ENCODE measurements at regions of chr14 and their contacts with region 1.

Region 1: DNA sequence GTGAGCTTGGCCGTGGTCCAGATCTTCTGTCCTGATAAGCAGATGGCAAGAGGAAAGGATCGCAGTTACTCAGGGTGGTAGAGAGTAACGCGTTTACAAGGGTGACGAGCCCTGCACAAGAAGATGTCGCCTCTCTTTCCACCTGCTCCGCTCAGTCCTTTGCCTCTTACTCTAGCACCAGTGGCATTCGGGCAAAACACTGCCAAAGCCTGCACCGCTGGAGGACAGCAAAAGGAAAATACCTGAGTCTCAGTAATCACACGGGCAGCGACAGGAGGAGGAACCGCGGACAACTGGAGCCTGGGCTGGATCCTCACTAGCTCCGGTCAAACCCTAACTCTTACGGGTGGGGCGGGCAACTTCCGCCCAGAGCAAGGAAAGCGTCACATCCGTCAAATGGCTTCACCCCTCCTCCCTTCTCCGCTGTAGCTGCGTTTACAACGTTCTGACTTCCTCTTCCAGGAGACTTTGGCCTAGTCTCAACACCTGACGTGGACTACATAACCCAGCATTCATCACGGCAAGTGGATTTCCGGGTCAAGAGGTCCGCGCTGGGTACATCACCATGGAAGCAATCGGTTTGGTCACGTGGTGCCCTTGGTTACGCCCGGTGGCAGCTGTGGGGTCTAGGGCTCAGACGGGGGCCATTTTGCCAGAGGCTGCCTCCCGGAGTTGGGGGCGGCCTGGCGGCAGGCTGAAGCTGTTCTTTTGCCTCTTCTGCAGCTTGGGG is at the starts of genes KLHL28 and TOGARAM1:
- DNase-seq: peak; percentile 86
- ATAC-seq: peak; percentile 91
- H3K4me3 Mint-ChIP-seq: no peak within 1 kb of the TSS
- H3K27ac Mint-ChIP-seq: no peak within 1 kb of the TSS
- H3K4me1 Mint-ChIP-seq: peaks cover 59% of the 10 kb centered on the region
- H3K27me3 Mint-ChIP-seq: no peaks in the 10 kb centered on the region
- CTCF ChIP-seq: no peak
- total RNA-seq, gene KLHL28: 18.1 and 25.3 TPM in 2 replicates
- total RNA-seq, gene TOGARAM1: 12.7 and 16.9 TPM in 2 replicates

Region 2: GRCh38 chr14:44142006-44142405 is 819.8 kb before region 1 on chr14:
- CTCF ChIA-PET with region 1: no interaction called
- POLR2A ChIA-PET with region 1: no interaction called
- intact Hi-C with region 1: no loop called
- DNase-seq: no peak
- ATAC-seq: no peak
- H3K4me3 Mint-ChIP-seq: no peak overlapping the region
- H3K27ac Mint-ChIP-seq: no peak overlapping the region
- H3K4me1 Mint-ChIP-seq: no peaks in the 10 kb centered on the region
- H3K27me3 Mint-ChIP-seq: no peaks in the 10 kb centered on the region
- CTCF ChIP-seq: no peak

Region 3: DNA sequence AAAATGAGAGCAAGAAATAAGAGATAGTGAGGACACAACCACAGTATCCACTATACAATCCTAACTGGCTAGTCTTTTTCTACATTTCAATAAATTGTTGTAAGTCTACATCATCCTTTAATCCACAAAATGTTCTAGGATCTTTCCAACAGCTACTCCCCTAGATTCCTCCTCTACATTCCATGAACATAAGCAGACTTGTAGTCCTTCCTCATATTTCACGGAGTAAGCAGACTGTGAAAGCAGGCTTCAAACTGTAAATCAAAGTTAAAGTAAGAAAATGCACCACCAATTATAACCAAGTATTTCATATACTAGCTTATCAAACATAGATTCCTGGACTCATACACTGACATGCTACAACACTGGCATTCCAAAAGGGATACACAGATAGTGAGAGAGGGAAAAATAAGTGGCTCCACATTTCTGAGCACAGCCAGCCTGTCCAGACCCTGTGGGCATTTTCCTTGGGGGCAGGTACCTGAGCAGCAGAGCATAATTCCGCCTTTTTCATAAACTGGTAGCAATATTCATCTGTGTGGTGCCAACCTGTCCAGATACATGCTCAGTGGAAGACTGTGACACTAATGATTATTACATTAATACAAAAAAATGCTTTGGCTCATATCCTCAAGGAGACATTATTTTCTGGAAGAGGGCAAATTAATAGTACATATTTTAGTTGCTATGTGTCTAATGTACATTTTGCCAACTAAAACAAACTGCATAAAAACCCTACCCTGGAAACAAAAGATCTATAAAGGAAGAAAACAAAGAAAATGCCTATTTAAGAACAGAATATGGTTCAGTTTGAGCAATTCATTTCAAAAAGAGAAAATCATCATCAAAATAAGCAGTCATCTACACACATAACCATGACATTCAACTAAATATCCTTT is 341.4 kb before region 1 on chr14:
- CTCF ChIA-PET with region 1: no interaction called
- POLR2A ChIA-PET with region 1: no interaction called
- intact Hi-C with region 1: no loop called
- DNase-seq: no peak
- ATAC-seq: no peak
- H3K4me3 Mint-ChIP-seq: no peak overlapping the region
- H3K27ac Mint-ChIP-seq: no peak overlapping the region
- H3K4me1 Mint-ChIP-seq: no peaks in the 10 kb centered on the region
- H3K27me3 Mint-ChIP-seq: no peaks in the 10 kb centered on the region
- CTCF ChIP-seq: no peak

Region 4: DNA sequence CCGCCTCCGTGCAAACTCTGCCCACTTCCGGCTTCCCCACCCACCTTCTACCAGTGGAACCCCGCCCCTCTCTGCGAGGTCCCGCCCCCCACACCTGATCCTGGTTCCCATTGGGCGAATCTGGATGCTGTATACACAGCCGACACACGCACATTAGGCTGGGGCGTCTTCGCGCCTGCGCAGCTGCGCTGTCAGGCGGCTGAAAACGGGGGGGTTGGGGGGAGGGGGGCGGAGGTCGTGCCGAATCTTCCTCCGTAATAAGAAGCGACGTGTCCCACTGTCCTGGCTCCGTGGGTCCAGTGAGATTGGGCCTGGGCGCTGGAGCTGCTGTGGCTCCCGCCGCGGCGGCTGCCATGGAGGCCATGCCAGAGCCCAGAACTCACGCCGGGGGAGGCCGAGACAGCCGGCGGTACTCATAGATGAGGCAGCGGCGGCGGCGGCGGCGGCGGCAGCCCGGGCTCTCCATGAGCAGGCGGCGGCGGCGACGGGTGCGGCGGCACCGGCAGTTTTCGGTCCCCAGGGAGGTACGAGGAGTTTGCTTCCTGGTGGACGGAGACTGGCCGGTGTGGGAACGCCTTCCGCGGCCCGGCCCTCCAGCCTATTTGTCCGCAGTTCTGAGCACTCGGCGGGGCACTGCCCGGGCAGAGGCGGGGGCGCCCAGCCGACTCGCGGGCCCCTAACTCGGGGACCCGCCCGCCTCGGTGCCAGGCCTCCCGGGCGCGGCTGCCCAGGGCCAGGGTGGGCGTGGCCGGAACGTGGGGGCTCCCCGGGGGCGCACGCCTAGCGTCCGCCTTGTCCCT is 64.5 kb before region 1 on chr14:
- CTCF ChIA-PET with region 1: interaction called, 10 read pairs
- POLR2A ChIA-PET with region 1: interaction called, 64 read pairs
- intact Hi-C with region 1: loop called (anchors 1 kb)
- DNase-seq: peak; percentile 75
- ATAC-seq: peak; percentile 97
- H3K4me3 Mint-ChIP-seq: peak overlapping the region; percentile 93
- H3K27ac Mint-ChIP-seq: peak overlapping the region; percentile 94
- H3K4me1 Mint-ChIP-seq: peaks cover 17% of the 10 kb centered on the region
- H3K27me3 Mint-ChIP-seq: no peaks in the 10 kb centered on the region
- CTCF ChIP-seq: no peak

Region 5: GRCh38 chr14:44945264-44945663 is 16.5 kb before region 1 on chr14:
- CTCF ChIA-PET with region 1: no interaction called
- POLR2A ChIA-PET with region 1: interaction called, 4 read pairs
- intact Hi-C with region 1: loop called (anchors 1 kb)
- DNase-seq: no peak
- ATAC-seq: no peak
- H3K4me3 Mint-ChIP-seq: no peak overlapping the region
- H3K27ac Mint-ChIP-seq: no peak overlapping the region
- H3K4me1 Mint-ChIP-seq: no peaks in the 10 kb centered on the region
- H3K27me3 Mint-ChIP-seq: no peaks in the 10 kb centered on the region
- CTCF ChIP-seq: no peak

Region 6: DNA sequence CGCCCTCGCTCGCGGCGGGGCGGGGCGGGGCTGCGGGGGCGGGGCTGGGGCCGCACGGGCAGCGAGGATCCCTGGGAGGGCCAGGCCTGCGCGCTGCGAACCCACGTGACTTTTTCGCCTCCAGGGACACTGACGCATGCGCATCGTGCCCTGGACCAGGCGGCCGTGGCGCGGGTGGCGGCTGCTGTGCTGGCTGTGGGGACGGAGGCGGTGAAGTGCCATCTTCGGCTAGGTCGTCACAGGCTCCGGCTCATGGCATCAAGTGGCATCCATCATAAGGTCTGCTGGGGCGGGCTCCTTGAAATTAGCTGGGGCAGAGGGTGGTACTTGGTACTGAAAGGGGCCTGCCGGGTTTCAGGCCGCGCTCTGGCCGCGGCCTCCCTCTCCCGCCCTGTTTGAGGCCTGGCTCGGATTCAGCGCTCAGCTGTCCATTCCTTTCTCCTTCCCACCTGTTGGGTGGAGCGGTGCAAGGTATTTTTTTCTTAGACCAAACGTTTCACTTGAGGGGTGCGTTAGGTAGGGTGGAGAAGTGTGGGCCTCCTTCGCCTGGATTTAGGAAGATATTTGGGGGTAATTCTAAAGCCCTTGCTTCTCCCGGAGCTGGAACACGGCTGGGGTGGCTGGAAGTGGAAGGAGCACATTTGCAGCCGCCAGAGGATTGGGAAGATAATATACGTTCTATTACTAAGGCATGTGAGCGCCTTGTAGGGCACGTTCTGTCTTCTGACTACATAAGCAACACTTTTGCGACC is 122.4 kb after region 1 on chr14 and contains the start of gene PRPF39:
- CTCF ChIA-PET with region 1: no interaction called
- POLR2A ChIA-PET with region 1: interaction called, 12 read pairs
- intact Hi-C with region 1: loop called (anchors 1 kb)
- DNase-seq: peak; percentile 97
- ATAC-seq: peak; percentile 94
- H3K4me3 Mint-ChIP-seq: peak within 1 kb of the TSS; percentile 96
- H3K27ac Mint-ChIP-seq: peak within 1 kb of the TSS; percentile 92
- H3K4me1 Mint-ChIP-seq: peaks cover 46% of the 10 kb centered on the region
- H3K27me3 Mint-ChIP-seq: no peaks in the 10 kb centered on the region
- CTCF ChIP-seq: no peak
- total RNA-seq, gene PRPF39: 46.0 and 53.4 TPM in 2 replicates

Region 7: DNA sequence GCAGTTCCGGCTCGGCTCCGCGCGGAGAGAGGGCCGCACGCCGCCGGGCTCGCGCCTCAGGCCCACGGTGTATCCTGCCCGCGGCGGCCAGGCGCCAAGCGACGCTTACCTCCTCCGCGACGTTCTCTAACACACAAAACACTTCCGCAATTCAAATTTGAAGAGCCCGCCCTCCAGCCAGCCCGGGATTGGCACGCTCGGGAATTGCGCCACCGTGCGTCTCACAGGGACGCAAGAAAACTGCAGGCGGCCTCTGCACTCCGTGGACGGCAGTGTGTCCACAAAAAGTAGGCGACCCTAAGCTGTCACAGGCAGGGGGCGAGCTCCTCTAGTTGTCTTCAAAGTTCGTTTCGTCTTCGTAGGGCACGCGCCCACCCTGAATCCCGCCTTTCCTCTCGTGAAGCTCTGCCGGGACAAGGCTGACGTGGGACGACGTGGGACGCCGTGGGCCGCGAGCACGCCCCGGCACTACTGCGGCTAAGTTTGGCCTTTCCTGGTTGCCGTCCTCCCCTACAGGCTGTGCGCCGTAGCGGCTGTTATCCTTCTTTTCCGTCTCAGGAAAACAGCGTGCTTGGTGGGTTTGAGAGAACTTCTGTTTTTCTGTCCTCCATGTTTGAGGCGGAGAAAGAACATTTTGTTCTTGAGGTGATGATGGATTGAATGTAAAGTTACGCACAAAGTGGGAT is 291.4 kb after region 1 on chr14 and contains the start of gene MIS18BP1:
- CTCF ChIA-PET with region 1: interaction called, 5 read pairs
- POLR2A ChIA-PET with region 1: interaction called, 23 read pairs
- intact Hi-C with region 1: loop called (anchors 1 kb)
- DNase-seq: peak; percentile 87
- ATAC-seq: peak; percentile 88
- H3K4me3 Mint-ChIP-seq: peak within 1 kb of the TSS; percentile 94
- H3K27ac Mint-ChIP-seq: peak within 1 kb of the TSS; percentile 95
- H3K4me1 Mint-ChIP-seq: peaks cover 38% of the 10 kb centered on the region
- H3K27me3 Mint-ChIP-seq: no peaks in the 10 kb centered on the region
- CTCF ChIP-seq: no peak
- total RNA-seq, gene MIS18BP1: 38.8 and 47.1 TPM in 2 replicates

Region 8: DNA sequence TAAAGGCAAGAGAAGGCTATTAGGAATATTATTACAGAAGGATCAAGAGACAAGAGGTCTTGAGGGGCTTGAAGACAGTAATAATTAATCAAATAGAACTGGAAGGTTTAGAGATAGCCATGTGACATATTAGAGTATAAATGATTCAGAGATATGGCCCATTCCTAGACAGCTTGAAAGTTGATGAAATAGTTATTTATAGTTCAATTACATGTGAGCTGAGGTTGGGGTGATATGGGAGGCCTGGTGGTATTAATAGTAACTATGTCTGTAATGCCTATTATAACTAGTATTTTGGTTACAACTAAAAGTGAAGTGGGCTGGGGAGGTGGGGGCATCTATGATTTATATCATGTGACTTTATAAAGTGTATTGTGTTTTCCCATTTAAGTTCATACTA is 305.3 kb after region 1 on chr14:
- CTCF ChIA-PET with region 1: no interaction called
- POLR2A ChIA-PET with region 1: no interaction called
- intact Hi-C with region 1: loop called (anchors 5 kb)
- DNase-seq: no peak
- ATAC-seq: no peak
- H3K4me3 Mint-ChIP-seq: no peak overlapping the region
- H3K27ac Mint-ChIP-seq: no peak overlapping the region
- H3K4me1 Mint-ChIP-seq: no peaks in the 10 kb centered on the region
- H3K27me3 Mint-ChIP-seq: peaks cover 5% of the 10 kb centered on the region
- CTCF ChIP-seq: no peak